MCF 10A (cell line): ENCODE measurements at regions of chr1 and their contacts with region 1.

Region 1: DNA sequence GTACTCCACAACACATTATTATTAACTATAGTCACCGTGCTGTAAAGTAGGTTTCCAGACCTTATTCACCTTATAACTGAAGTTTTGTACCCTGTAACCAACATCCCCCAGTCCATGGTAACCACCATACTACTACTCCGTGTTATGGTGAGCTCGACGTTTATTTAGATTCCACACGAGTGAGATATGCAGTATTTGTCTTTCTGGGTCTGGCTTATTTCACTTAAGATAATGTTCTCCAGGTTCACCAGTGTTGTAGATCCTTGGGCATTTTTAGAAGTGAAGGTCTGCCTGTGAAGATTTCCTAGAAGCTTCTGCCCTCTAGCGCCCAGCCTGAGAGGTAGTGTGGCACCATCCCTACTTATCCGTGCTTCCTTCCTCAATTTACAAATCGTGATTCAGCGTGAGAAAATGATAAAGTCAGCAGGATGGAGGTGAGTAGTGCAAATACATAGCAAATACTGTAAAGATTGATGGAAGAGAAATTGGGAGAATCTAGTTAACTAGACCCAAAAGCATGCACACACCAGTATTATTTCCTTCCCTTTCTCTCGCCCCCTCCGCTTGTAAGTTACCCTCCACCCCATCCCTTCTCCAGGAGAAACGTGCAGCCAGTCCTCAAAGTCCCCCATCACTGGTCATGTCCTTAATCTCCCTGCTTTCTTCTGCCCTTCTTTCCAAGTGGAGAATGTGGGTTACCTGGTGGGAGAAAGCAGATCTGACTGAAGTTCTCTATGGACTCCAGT is 36.0 kb upstream of the DISC1 start:
- DNase-seq: peak; percentile 85
- H3K4me3 Mint-ChIP-seq: no peak overlapping the region
- H3K27ac Mint-ChIP-seq: no peak overlapping the region
- H3K4me1 Mint-ChIP-seq: peaks cover 8% of the 10 kb centered on the region
- H3K27me3 Mint-ChIP-seq: no peaks in the 10 kb centered on the region
- CTCF ChIP-seq: peak; percentile 96

Region 2: GRCh38 chr1:231315887-231316286 is 274.7 kb before region 1 on chr1:
- CTCF ChIA-PET with region 1: interaction called, 4 read pairs
- POLR2A ChIA-PET with region 1: interaction called, 3 read pairs
- intact Hi-C with region 1: loop called (anchors 1 kb)
- DNase-seq: peak; percentile 73
- H3K4me3 Mint-ChIP-seq: no peak overlapping the region
- H3K27ac Mint-ChIP-seq: no peak overlapping the region
- H3K4me1 Mint-ChIP-seq: peaks cover 6% of the 10 kb centered on the region
- H3K27me3 Mint-ChIP-seq: no peaks in the 10 kb centered on the region
- CTCF ChIP-seq: peak; percentile 69

Region 3: DNA sequence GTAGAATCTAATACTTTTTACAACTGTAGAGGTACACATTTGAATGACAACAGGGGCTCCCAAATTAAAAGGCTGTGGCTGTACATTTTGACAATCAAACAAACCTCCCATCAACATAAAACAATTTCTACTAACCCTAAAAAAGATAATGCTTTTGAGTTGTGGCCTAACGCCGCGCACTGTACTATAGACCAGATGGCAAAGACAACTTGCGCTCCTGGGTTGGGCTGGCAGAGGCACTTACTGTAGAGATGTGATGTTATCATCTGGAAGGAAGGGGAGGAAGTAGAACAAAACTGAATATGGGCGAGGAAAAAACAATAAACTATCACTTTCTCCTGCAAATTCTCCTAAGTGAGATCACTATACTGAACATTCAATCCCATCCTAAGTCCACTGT is 226.4 kb before region 1 on chr1:
- CTCF ChIA-PET with region 1: interaction called, 51 read pairs
- POLR2A ChIA-PET with region 1: interaction called, 3 read pairs
- intact Hi-C with region 1: no loop called
- DNase-seq: no peak
- H3K4me3 Mint-ChIP-seq: no peak overlapping the region
- H3K27ac Mint-ChIP-seq: no peak overlapping the region
- H3K4me1 Mint-ChIP-seq: peaks cover 7% of the 10 kb centered on the region
- H3K27me3 Mint-ChIP-seq: no peaks in the 10 kb centered on the region
- CTCF ChIP-seq: no peak

Region 4: GRCh38 chr1:231528172-231529029 is 62.2 kb before region 1 on chr1 and contains the start of gene TSNAX:
- CTCF ChIA-PET with region 1: interaction called, 10 read pairs
- POLR2A ChIA-PET with region 1: interaction called, 3 read pairs
- intact Hi-C with region 1: no loop called
- DNase-seq: peak; percentile 97
- H3K4me3 Mint-ChIP-seq: peak within 1 kb of the TSS; percentile 97
- H3K27ac Mint-ChIP-seq: peak within 1 kb of the TSS; percentile 98
- H3K4me1 Mint-ChIP-seq: peaks cover 36% of the 10 kb centered on the region
- H3K27me3 Mint-ChIP-seq: no peaks in the 10 kb centered on the region
- CTCF ChIP-seq: no peak
- total RNA-seq, gene TSNAX: 79.0 and 80.2 TPM in 2 replicates

Region 5: GRCh38 chr1:231575472-231575871 is 15.2 kb before region 1 on chr1:
- CTCF ChIA-PET with region 1: interaction called, 20 read pairs
- POLR2A ChIA-PET with region 1: interaction called, 3 read pairs
- intact Hi-C with region 1: no loop called
- DNase-seq: no peak
- H3K4me3 Mint-ChIP-seq: no peak overlapping the region
- H3K27ac Mint-ChIP-seq: no peak overlapping the region
- H3K4me1 Mint-ChIP-seq: no peaks in the 10 kb centered on the region
- H3K27me3 Mint-ChIP-seq: no peaks in the 10 kb centered on the region
- CTCF ChIP-seq: no peak

Region 6: GRCh38 chr1:231618609-231619256 is 28.1 kb after region 1 on chr1:
- CTCF ChIA-PET with region 1: interaction called, 11 read pairs
- POLR2A ChIA-PET with region 1: no interaction called
- intact Hi-C with region 1: no loop called
- DNase-seq: no peak
- H3K4me3 Mint-ChIP-seq: no peak overlapping the region
- H3K27ac Mint-ChIP-seq: no peak overlapping the region
- H3K4me1 Mint-ChIP-seq: no peaks in the 10 kb centered on the region
- H3K27me3 Mint-ChIP-seq: peaks cover 91% of the 10 kb centered on the region
- CTCF ChIP-seq: no peak